PC-9 (cell line): ENCODE measurements at regions of chrX and their contacts with region 1.

Region 1: DNA sequence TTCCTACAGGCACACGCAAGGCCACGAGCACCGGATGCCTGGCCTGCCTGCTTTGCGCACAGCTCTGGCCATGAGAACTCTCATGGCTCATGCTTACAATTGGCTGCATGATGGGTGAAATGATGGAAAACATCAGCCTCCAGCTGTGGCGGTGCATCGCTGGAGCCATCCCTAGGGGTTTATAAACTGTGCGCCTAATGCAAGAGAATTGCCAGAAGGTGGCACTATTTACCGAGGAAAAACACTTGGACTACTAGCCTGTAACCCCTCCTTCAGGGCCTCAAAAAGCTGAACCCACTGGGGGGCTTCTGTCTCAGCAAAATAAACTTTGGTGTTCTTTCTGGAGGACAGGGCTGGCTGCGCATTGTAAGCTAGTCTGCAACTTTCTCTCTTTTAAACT is 51.9 kb downstream of the PHKA2 start:
- DNase-seq: no peak
- H3K4me3 ChIP-seq: no peak overlapping the region
- H3K27ac ChIP-seq: no peak overlapping the region
- H3K4me1 ChIP-seq: no peaks in the 10 kb centered on the region
- H3K27me3 ChIP-seq: no peaks in the 10 kb centered on the region
- CTCF ChIP-seq: peak; percentile 54

Region 2: DNA sequence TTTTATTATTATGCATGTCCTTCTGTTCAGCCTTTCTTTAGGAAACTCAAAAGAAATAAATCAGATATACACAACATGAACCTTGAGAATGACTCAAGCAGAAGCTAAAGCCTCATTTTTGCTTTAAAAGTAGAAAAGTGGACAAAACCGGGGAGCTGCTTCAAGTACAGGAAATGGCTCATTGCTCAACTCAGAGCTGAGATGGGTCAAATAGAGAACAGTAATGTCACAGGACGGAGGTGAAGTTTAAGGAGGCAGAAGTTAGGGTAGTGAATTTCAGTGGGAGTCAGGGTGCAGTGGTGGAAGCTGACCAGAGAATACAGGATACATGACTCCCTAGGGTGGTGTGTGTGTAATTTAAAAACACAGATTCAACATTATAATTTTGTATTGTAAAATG is 29.7 kb after region 1 on chrX:
- CTCF ChIA-PET with region 1: no interaction called
- POLR2A ChIA-PET with region 1: no interaction called
- intact Hi-C with region 1: no loop called
- DNase-seq: no peak
- H3K4me3 ChIP-seq: no peak overlapping the region
- H3K27ac ChIP-seq: no peak overlapping the region
- H3K4me1 ChIP-seq: no peaks in the 10 kb centered on the region
- H3K27me3 ChIP-seq: no peaks in the 10 kb centered on the region
- CTCF ChIP-seq: no peak

Region 3: GRCh38 chrX:19017271-19017670 is 85.3 kb after region 1 on chrX:
- CTCF ChIA-PET with region 1: no interaction called
- POLR2A ChIA-PET with region 1: no interaction called
- intact Hi-C with region 1: loop called (anchors 10 kb)
- DNase-seq: peak in 1 of 2 experiments; percentile 6
- H3K4me3 ChIP-seq: no peak overlapping the region
- H3K27ac ChIP-seq: no peak overlapping the region
- H3K4me1 ChIP-seq: no peaks in the 10 kb centered on the region
- H3K27me3 ChIP-seq: no peaks in the 10 kb centered on the region
- CTCF ChIP-seq: peak; percentile 64